HEK293 (cell line): ENCODE measurements at regions of chr20 and their contacts with region 1.

Region 1: GRCh38 chr20:57622579-57623377 is 2.6 kb upstream of the ZBP1 start:
- H3K4me3 ChIP-seq: no peak overlapping the region
- H3K27ac ChIP-seq: no peak overlapping the region
- H3K4me1 ChIP-seq: peaks cover 3% of the 10 kb centered on the region; the same call in 1 of the 2 replicates
- CTCF ChIP-seq: peak; percentile 83

Region 2: GRCh38 chr20:58087193-58087858 is 464.5 kb after region 1 on chr20:
- CTCF ChIA-PET with region 1: interaction called, 50 read pairs
- POLR2A ChIA-PET with region 1: no interaction called
- H3K4me3 ChIP-seq: no peak overlapping the region
- H3K27ac ChIP-seq: no peak overlapping the region
- H3K4me1 ChIP-seq: no peaks in the 10 kb centered on the region
- CTCF ChIP-seq: no peak

Region 3: DNA sequence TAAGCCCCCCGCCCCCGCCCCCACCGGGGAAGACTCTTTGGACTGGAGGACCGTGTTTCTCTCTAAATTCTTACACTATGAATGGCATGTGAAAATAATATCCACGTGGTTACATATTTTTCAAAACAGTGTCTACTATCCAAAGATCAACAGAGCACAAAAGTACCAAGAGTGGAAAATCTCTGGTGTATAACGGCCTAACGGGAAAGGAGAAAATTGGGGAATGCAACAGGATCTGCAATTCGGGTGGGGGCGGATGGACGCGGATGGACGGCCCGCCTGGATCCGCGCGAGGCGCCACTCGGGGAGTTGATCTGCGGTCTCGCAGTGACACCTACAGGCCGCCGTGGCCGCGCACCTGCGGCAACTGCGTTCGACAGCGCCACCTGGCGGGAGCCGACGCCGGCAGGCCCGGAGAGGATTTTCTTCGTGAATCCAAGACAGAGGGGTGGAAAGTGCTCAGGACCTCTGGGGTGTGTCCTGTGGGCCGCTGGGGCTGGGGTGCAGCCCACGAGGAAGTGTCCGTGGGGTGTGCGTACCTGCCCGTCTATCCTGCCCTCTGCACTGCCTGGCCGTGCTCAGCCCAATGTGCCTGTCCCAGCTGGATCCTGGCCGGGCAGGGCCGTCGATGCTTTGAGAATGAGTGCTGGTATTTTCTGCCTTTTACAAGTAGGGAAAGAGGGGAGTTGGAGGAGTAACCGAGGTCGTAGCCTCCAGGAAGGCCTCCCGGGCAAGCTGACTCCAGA is 587.0 kb after region 1 on chr20:
- CTCF ChIA-PET with region 1: interaction called, 11 read pairs
- POLR2A ChIA-PET with region 1: no interaction called
- H3K4me3 ChIP-seq: no peak overlapping the region
- H3K27ac ChIP-seq: no peak overlapping the region
- H3K4me1 ChIP-seq: no peaks in the 10 kb centered on the region
- CTCF ChIP-seq: peak; percentile 100